ENCODE measurements at regions of chr3 and their contacts with region 1.

Region 1: GRCh38 chr3:138227650-138228049 is 40.5 kb downstream of the ARMC8 start:
- DNase-seq: no peak
- H3K4me3 Mint-ChIP-seq: no peak overlapping the region
- H3K27ac Mint-ChIP-seq: no peak overlapping the region
- H3K4me1 Mint-ChIP-seq: no peaks in the 10 kb centered on the region
- H3K27me3 Mint-ChIP-seq: no peaks in the 10 kb centered on the region
- CTCF ChIP-seq: no peak

Region 2: DNA sequence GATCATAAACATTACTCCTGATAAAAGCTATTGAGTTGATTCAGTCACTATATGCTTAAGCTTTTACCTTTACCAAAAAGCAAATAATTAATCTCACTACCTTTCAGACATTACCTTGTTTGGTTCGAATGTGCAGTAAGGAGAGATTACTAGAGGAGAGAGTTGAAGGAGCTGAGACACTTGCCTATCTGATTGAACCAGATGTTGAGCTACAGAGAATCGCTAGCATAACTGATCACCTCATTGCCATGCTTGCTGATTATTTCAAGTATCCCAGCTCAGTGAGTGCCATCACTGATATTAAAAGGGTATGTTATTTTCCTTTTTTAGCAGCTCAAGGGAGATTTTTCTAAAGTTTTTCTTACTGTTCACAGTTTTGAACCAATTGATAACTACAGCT is 14.0 kb after region 1 on chr3:
- CTCF ChIA-PET with region 1: interaction called, 11 read pairs
- intact Hi-C with region 1: no loop called
- DNase-seq: no peak
- H3K4me3 Mint-ChIP-seq: no peak overlapping the region
- H3K27ac Mint-ChIP-seq: no peak overlapping the region
- H3K4me1 Mint-ChIP-seq: no peaks in the 10 kb centered on the region
- H3K27me3 Mint-ChIP-seq: no peaks in the 10 kb centered on the region
- CTCF ChIP-seq: no peak

Region 3: GRCh38 chr3:138284957-138285477 is 57.4 kb after region 1 on chr3:
- CTCF ChIA-PET with region 1: no interaction called
- intact Hi-C with region 1: no loop called
- DNase-seq: no peak
- H3K4me3 Mint-ChIP-seq: no peak overlapping the region
- H3K27ac Mint-ChIP-seq: no peak overlapping the region
- H3K4me1 Mint-ChIP-seq: no peaks in the 10 kb centered on the region
- H3K27me3 Mint-ChIP-seq: no peaks in the 10 kb centered on the region
- CTCF ChIP-seq: no peak